KBM-7 (cell line): ENCODE measurements at regions of chr19 and their contacts with region 1.

Region 1: DNA sequence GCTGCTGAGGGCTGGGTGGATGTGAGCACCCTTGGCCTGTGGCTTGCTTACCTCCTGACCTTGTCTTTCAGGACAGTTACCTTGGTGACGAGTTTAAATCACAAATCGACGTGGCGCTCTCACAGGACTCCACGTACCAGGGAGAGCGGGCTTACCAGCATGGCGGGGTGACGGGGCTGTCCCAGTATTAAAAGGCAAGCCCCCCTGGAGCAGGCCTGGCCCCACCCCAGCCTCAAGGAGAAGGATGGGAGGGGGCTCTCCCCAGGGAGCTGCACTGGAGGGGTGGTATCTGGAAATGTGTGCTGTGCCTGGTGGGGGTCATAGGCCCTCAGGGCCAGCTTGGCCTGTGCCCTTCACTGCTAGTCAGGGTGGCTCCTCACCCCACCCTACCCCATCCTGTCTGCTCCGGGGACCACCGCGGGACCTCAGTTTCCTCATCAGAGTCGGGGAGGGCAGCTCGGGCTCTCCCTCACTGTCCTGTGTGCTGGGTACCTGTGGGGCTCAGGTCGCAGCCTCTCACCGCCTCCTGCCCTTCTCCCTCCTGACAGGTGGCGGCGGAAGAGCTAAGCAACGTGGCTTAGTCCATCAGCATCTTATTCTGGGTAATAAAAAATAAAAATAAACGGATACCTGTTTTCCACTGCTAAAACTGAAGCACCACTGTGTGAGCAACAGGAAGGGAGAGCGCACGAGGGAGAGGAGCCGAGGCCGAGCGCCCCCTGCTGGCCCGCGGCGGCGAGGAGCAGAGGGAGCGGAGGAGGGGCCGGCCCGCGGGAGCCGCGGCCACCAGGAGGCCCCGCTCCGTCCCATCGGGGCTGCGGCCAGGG is 29.8 kb downstream of the CERS1 start:
- DNase-seq: peak; percentile 78

Region 2: DNA sequence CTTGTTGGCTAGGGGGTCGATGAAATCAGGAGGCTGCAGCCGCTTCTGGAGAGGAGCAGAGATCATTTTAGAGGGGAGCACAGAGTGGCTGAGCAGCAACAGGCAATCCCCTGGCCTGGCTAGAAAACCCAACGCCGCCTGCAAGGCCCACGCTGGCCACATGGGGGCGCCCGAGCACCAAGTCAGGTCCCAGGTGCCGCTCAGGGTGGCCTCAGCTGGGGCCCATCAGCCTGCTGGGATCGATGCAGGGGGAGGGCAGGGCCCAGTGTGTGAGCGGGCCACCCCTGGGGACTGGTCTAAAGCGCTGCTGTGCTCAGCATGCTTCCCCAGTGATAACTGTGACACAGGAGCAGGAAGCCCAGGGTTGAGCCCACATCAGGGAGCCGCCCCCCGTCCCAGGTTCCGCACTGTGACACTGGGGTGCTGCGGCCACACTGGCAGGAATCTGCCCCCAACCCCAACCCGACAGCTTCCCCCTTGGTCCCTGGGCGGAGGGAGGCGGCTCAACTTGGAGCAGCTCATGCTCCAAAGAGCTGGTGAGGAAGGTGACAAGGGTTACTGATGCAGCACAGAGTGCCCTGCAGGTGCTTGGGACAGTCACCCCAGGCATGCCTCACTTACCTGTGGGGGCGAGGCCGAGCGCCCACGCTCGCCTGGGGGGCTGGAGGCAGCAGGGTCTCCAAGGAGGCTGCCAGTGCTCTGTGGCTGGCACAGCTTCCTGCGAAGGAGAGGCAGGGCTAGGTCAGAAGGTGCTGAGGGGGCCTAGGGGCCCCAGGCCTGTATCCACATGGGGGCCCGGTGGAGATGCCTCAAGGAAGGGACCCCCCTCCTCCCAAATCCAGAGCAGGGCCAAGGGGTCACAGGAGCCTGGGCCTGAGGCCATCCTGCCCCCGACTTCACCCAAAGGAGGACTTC is 415.0 kb before region 1 on chr19:
- in situ Hi-C with region 1: loop called (anchors 25 kb)
- DNase-seq: peak; percentile 81

Region 3: GRCh38 chr19:18795540-18795939 is 70.6 kb before region 1 on chr19:
- in situ Hi-C with region 1: no loop called
- DNase-seq: no peak